ENCODE measurements at regions of chr1 and their contacts with region 1.

Region 1: GRCh38 chr1:117077267-117077666 is 17.1 kb downstream of the TTF2 start:
- DNase-seq: peak; percentile 88
- ATAC-seq: peak; percentile 99
- H3K4me3 ChIP-seq: no peak overlapping the region
- H3K27ac ChIP-seq: peak overlapping the region; percentile 57
- H3K4me1 ChIP-seq: peaks cover 19% of the 10 kb centered on the region
- H3K27me3 ChIP-seq: no peaks in the 10 kb centered on the region
- CTCF ChIP-seq: no peak

Region 2: GRCh38 chr1:117093870-117094621 is 16.8 kb after region 1 on chr1:
- CTCF ChIA-PET with region 1: no interaction called
- POLR2A ChIA-PET with region 1: interaction called, 7 read pairs
- intact Hi-C with region 1: loop called (anchors 2 kb)
- DNase-seq: peak; percentile 52
- ATAC-seq: peak; percentile 24; the same call in 1 of the 2 replicates
- H3K4me3 ChIP-seq: no peak overlapping the region
- H3K27ac ChIP-seq: peak overlapping the region; percentile 69
- H3K4me1 ChIP-seq: peaks cover 20% of the 10 kb centered on the region
- H3K27me3 ChIP-seq: no peaks in the 10 kb centered on the region
- CTCF ChIP-seq: peak; percentile 46